RWPE1 (cell line): ENCODE measurements at regions of chr1 and their contacts with region 1.

Region 1: GRCh38 chr1:110209715-110210603 is at the start of gene KCNC4:
- DNase-seq: peak; percentile 77
- H3K27ac ChIP-seq: peak within 1 kb of the TSS; percentile 69
- CTCF ChIP-seq: no peak

Region 2: GRCh38 chr1:110165761-110166317 is 44.1 kb before region 1 on chr1:
- CTCF ChIA-PET with region 1: no interaction called
- POLR2A ChIA-PET with region 1: no interaction called
- DNase-seq: no peak
- H3K27ac ChIP-seq: no peak overlapping the region
- CTCF ChIP-seq: no peak

Region 3: DNA sequence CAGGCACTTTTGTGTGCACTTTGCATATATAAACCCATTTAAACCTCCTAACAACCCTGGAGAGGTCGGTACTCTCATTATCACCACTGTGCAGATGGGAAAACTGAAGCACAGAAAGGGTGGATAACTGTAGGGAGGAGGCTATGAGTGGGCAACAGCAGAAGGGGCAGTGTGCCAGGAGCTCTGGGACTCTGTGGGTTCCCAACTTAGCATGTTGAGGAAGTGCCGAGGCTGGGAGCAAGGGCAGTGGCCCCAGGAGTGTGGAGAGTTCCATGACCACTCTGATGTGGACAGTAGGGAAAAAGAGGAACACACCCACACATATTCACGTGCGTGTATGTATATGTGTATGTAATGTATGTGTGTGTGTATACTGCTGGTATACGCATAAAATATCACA is 25.5 kb before region 1 on chr1:
- CTCF ChIA-PET with region 1: no interaction called
- POLR2A ChIA-PET with region 1: no interaction called
- DNase-seq: no peak
- H3K27ac ChIP-seq: no peak overlapping the region
- CTCF ChIP-seq: no peak

Region 4: DNA sequence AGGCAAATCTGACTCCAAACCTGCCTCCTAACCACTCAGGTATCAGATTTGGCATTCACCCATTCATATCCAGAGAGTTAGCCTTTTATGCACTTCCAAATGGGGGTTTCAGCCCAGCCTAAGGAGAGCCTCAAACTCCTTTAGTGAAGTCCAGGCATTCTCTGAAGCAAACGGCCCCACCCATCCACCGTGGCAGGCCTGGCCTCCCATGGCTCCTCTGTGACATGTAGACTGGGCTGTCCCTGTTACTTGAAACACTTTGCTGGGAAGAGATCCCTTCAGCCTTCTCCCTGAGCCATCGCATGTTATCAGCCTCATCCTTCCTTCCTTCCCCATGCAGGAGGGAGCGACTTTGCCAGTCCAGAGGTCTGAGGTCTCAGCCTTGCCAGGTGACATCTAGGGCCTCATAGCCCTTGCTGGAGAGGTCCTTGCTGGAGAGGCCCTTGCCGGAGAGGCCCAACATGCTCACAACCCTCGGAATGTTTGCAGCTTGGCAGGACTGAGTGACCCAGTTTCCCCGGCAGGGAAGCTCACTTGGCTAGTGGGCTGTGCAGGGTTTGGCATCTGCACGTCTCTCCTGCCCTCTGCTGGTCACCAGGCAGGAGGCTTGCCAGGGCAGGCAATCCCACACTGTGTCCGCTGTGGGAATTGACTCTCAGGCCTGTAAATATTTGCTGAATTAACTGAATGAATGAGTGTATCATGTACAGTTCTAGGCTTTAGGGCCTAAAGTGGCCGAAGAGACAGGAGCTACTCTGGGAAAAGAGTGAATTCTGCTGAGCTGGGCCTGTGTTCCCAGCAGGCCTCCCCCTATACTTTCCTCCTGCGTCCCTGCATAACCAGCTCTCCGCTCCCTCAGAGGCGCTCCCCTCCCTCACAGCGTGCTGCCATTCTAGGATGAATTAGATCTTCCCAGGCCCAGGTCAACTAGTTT is 102.5 kb after region 1 on chr1:
- CTCF ChIA-PET with region 1: interaction called, 265 read pairs
- POLR2A ChIA-PET with region 1: interaction called, 3 read pairs
- DNase-seq: peak; percentile 63
- H3K27ac ChIP-seq: no peak overlapping the region
- CTCF ChIP-seq: peak; percentile 80

Region 5: DNA sequence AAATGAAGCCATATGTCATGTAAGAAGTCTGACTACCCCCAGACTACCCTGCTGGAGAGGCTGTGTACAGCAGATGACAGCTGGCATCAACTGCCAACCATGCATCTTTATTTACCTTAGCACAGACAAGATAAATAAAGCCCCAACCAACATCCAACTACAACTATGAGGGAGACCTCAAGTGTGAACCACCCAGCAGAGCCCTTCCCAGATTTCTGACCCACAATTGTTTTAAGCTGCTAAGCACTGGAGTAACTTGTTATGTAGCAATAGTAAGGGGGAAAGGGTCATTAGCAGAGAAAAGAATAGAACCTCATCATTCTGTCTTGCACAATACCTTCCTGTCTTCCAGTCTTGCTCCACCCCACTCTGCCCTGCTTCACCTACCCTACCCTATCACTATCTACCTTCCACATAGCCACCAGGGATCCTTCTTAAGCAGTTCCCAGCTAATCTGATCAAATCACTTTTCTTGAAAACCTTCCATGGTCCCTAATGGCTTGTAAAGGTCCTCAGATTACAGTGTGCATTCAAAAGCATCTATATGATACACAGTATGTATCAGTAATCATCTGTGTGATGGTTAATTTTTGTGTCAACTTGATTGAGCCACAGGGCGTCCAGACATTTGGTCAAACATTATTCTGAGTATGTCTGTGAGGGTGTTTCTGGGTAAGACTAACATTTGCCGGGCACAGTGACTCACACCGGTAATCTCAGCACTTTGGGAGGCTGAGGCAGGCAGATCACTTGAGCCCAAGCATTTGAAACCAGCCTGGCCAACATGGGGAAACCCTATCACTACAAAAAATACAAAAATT is 109.6 kb after region 1 on chr1:
- CTCF ChIA-PET with region 1: interaction called, 265 read pairs
- POLR2A ChIA-PET with region 1: no interaction called
- DNase-seq: no peak
- H3K27ac ChIP-seq: no peak overlapping the region
- CTCF ChIP-seq: no peak

Region 6: GRCh38 chr1:110343249-110343648 is 133.3 kb after region 1 on chr1:
- CTCF ChIA-PET with region 1: interaction called, 14 read pairs
- POLR2A ChIA-PET with region 1: no interaction called
- DNase-seq: no peak
- H3K27ac ChIP-seq: no peak overlapping the region
- CTCF ChIP-seq: no peak